ENCODE measurements at regions of chrX and their contacts with region 1.

Region 1: GRCh38 chrX:107776649-107777535 is 641 bp upstream of the NCBP2L start:
- ATAC-seq: peak; percentile 48 to 79 (median 67)
- H3K4me3 ChIP-seq: peak overlapping the region in 4 of 5 donors; percentile 13 to 46 (median 42)
- H3K27ac ChIP-seq: no peak overlapping the region
- H3K4me1 ChIP-seq: peaks cover 8 to 19% of the 10 kb centered on the region in 2 donors

Region 2: DNA sequence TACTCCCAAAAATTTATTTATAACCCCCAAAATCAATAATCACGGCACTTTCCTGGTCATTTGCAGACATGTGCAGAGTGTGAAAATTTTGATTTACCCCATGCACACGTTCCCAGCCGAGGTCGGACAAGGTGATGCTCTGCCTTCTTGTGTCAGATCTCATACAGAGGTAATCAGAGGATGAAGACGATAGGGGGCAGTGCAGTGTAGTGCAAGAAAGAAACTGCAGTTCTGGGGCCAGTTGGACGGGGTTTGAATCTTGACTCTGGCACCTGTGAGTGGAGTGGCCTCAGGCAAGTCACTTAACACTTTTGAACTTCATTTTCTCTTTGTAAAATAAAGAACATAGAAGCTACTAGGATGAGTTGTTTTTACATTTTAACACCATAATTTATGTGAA is 239.1 kb before region 1 on chrX:
- in situ Hi-C with region 1: loop called in 1 of 9 experiments (anchors 25 kb)
- ATAC-seq: peak in 3 of 8 experiments; percentile 71 to 89 (median 74)
- H3K4me3 ChIP-seq: no peak overlapping the region
- H3K27ac ChIP-seq: no peak overlapping the region
- H3K4me1 ChIP-seq: peaks cover 12 to 13% of the 10 kb centered on the region in 2 donors

Region 3: GRCh38 chrX:107894038-107894437 is 117.1 kb after region 1 on chrX:
- in situ Hi-C with region 1: loop called in 1 of 9 experiments (anchors 25 kb)
- ATAC-seq: peak in 3 of 8 experiments; percentile 45 to 68 (median 52)
- H3K4me3 ChIP-seq: no peak overlapping the region
- H3K27ac ChIP-seq: no peak overlapping the region
- H3K4me1 ChIP-seq: no peaks in the 10 kb centered on the region

Region 4: GRCh38 chrX:108072746-108073145 is 295.9 kb after region 1 on chrX:
- in situ Hi-C with region 1: no loop called
- ATAC-seq: no peak
- H3K4me3 ChIP-seq: no peak overlapping the region
- H3K27ac ChIP-seq: no peak overlapping the region
- H3K4me1 ChIP-seq: no peaks in the 10 kb centered on the region

Measured in motor neuron (in vitro differentiated cells).